ENCODE measurements at regions of chr17 and their contacts with region 1.

Region 1: GRCh38 chr17:35808962-35809854 is at the start of gene TAF15:
- DNase-seq: peak; percentile 95
- H3K4me3 ChIP-seq: peak within 1 kb of the TSS; percentile 88
- CTCF ChIP-seq: peak; percentile 83

Region 2: DNA sequence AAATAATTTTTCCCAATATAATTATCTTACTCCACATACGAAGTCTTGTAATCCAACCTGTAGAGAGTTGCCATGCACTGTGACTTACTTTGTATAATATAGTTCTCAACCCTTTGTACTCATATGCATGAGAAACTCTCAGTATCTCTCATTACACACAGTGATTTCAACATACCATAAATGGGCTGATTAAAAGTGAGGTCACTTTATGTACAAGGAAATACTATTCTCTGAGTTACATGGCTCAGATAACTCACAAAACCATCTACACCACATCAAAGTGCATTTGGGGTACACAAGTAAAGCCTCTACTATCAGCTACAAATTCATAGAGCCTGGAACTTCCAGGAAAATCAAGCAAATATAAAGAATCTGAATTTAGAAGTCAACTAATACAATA is 404.8 kb before region 1 on chr17:
- CTCF ChIA-PET with region 1: no interaction called
- POLR2A ChIA-PET with region 1: no interaction called
- DNase-seq: no peak
- H3K4me3 ChIP-seq: no peak overlapping the region
- CTCF ChIP-seq: no peak

Region 3: DNA sequence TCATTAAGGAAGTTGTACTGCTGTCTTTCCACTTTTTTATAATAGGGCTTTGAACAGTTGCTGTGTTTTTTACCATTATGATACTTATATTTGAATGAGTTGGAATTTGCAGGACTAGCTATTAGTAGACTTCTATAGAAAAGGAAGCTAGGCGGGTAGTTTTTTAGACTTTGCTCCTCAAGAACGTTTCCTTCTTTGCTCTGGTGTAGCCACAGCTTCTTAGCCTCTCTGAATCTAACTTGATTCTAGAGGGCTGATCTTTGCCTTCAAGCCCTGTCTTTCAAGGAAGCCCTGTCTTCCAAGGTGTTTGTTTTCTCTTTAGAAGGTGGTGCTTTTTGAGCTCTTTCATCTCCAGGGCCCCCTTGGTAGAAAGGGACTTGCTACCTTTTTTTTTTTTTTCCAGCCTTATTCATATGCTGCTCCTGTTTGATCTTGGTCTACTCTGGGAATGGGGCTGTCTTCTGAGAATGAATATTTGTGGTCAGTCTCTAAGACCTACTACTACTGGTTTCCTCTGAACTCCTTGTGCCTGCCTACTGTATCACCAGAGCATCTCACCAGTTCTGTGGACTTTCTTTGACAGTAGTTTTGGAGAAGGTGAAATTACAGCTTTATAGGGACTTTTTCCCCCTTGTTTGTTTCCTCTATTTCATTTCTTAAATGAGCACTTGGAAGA is 130.1 kb before region 1 on chr17:
- CTCF ChIA-PET with region 1: no interaction called
- POLR2A ChIA-PET with region 1: no interaction called
- DNase-seq: no peak
- H3K4me3 ChIP-seq: no peak overlapping the region
- CTCF ChIP-seq: no peak

Region 4: GRCh38 chr17:35788504-35789368 is 20.5 kb before region 1 on chr17:
- CTCF ChIA-PET with region 1: interaction called, 819 read pairs
- POLR2A ChIA-PET with region 1: interaction called, 6 read pairs
- DNase-seq: no peak
- H3K4me3 ChIP-seq: peak overlapping the region; percentile 4; the same call in 1 of the 2 replicates
- CTCF ChIP-seq: no peak

Region 5: DNA sequence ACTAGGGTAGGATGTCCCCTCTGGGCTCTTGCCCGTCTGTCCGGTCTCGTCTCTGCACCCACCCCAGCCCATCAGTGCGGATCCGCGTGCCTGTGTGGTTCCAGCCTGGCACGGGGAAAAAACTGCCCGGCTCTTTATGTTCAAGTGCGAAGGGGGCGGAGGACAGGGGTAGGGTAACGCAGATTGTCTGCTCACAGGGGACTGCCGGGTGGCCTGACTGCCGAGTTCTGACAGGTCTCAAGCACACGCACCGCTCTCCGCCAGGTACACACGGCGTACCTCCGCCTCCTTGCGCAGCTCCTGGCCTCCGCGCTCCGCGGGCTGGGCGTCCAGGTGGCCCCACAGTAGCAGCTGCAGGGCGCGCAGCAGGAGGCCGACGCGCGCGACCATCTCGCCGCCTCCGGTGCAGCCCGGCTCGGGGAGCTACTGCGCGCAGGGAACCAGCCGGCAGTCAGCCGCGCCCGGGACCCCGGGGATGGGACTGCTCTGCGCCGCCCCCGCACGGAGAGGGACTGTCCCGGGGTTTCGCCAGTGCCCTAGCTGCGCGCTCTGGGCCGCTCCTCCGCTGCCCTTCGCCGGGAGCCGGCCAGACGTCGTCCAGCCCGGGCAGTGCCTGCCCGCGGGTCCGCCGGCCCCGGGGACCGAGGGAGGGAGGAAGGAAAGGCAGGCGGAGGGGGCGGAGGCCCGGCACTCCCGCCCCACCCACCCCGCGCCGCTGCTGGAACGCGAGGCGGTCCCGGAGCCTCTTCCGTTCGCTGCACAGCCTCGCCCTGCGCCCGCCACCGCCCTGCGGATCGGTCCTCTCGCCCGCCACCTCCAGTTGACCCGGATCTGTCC is 14.0 kb before region 1 on chr17 and contains the start of gene MMP28:
- CTCF ChIA-PET with region 1: interaction called, 32 read pairs
- POLR2A ChIA-PET with region 1: interaction called, 4 read pairs
- DNase-seq: no peak
- H3K4me3 ChIP-seq: peak within 1 kb of the TSS; percentile 51
- CTCF ChIP-seq: no peak

Region 6: GRCh38 chr17:35819456-35819855 is 10.2 kb after region 1 on chr17:
- CTCF ChIA-PET with region 1: interaction called, 46 read pairs
- POLR2A ChIA-PET with region 1: interaction called, 10 read pairs
- DNase-seq: no peak
- H3K4me3 ChIP-seq: no peak overlapping the region
- CTCF ChIP-seq: no peak

Measured in AG04449 (cell line).